ENCODE measurements at regions of chr19 and their contacts with region 1.

Region 1: DNA sequence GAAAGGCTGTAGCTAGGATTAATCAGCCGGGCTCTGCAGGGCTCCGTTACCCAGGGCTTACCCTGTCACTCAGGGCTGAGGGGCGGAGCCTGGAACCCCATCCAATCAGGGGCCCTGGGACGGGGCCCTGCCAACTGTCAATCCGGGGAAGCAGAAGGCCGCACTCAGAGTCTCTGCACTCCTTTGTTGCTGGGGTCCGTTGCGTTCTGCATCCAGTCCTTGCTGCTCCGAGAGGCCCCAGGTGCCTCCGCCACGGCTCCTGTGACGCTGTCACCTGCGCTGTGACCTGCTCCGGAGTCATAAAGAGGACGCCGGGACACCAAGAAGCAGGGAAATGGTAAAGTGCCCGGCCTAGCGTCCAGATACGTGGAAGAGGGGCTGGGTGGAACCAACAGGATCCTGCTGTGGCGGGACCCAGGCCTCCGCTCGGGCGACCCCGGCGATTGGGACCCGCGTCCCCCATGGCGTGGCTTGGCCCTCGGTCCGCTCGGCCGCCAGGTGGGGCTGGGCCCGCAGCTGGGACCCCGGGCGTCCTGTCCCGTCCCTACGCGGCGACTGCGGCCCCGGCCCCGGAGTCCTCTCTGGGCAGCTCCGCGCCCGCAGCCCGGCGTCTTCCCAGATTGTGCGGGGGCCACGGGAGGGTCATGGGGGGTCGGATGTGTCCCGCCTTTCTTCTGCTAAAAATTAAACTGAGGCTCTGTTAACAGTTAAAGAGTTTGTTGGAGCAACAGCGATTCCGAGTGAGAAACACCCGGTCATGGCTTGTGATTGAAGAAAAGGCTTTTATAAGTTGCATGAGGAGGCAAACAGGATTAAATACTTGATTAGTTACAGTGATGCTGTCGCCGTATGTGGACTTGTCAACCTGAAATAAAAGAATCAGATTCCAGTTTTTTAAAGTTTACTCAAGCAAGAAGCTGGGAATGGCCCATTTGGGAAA is at the start of gene ZNF491:
- DNase-seq: peak; percentile 77
- ATAC-seq: peak; percentile 99
- H3K4me3 Mint-ChIP-seq: peak within 1 kb of the TSS; percentile 91
- H3K27ac Mint-ChIP-seq: peak within 1 kb of the TSS; percentile 71
- H3K4me1 Mint-ChIP-seq: peaks cover 25% of the 10 kb centered on the region
- H3K27me3 Mint-ChIP-seq: no peaks in the 10 kb centered on the region
- CTCF ChIP-seq: no peak
- total RNA-seq, gene ZNF491: 1.4 and 1.7 TPM in 2 replicates

Region 2: DNA sequence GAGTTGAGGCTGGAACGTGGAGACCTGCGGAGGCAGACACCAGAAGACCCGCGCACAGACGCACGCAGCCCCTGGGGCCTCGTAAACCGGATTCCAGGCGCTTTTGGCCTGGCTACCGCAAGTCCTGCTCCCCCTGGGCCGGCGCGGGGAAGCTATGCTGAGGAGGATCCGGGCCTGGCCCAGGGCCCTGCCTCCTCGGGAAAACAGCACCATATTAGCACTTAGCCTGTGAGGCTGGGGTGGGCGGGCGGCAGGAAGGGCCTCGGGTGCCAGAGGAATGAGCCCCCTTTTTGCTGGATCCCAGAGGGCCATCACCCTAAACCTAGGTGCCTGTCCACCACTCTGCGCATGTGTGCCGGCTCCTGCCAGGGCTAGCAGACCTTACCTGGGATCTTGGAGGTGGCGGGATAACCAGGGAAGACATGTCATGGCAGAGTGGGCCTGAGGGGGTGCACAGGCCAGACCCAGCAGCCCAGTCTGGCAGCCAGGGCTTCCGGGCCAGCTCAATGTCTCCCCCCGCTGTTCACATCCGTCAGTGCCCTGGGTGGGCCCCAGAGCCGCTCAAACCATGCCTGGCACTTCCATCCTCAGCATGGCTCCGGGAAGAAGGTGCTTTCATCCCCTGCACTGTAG is 246.9 kb before region 1 on chr19:
- CTCF ChIA-PET with region 1: no interaction called
- POLR2A ChIA-PET with region 1: no interaction called
- intact Hi-C with region 1: no loop called
- DNase-seq: no peak
- ATAC-seq: no peak
- H3K4me3 Mint-ChIP-seq: no peak overlapping the region
- H3K27ac Mint-ChIP-seq: no peak overlapping the region
- H3K4me1 Mint-ChIP-seq: peaks cover 39% of the 10 kb centered on the region
- H3K27me3 Mint-ChIP-seq: no peaks in the 10 kb centered on the region
- CTCF ChIP-seq: no peak

Region 3: DNA sequence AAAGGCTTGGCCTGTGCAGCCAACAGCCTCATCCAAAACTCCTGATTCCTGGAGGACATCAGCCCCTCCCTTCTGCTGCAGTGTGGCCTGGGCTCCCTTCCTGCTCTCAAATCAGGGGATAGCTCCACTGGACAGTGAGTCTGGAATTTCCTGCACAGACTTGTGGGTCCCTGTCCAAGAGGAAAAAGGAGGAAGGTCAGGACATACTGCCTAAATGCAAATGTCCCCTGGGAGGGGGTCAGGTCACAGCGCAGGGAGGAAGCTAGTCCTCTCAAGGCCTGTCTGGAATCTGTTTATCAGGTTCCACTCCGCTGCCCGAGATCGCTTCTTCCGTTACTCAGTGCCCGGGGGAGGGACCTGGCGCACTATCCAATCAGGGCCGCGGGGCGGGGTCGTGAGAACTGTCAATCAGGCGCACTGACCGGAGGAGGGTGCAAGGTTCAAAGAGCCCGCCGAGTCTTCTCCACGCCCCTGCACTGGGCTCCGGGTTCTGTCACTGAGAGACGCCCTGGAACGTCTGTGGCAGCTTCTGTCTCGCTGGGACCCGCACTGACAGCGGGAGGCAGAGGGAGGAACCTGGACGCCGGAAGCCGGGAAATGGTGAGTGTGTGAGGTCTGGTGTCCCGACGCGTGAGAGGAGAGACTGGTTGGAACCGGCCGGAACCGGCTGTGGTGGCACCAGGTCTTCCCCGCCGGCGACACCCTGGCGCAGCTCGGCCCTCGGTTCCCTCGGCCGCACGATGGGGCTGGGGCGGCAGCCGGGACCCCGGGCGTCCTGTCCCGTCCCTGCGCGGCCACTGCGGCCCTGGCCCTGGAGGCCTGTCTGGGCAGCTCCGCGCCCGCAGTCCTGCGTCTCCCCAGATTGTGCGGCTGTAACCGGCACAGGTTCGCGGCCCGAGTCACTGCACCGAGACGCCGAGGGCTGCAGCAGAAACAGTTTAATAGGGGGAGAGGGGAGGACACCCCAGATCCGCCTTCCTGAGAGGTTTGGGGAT is 31.8 kb before region 1 on chr19 and contains the start of gene ZNF441:
- CTCF ChIA-PET with region 1: interaction called, 6 read pairs
- POLR2A ChIA-PET with region 1: interaction called, 9 read pairs
- intact Hi-C with region 1: loop called (anchors 1 kb)
- DNase-seq: peak; percentile 87
- ATAC-seq: peak; percentile 95
- H3K4me3 Mint-ChIP-seq: peak within 1 kb of the TSS; percentile 99
- H3K27ac Mint-ChIP-seq: peak within 1 kb of the TSS; percentile 96
- H3K4me1 Mint-ChIP-seq: peaks cover 25% of the 10 kb centered on the region
- H3K27me3 Mint-ChIP-seq: peaks cover 2% of the 10 kb centered on the region
- CTCF ChIP-seq: no peak
- total RNA-seq, gene ZNF441: 23.3 and 23.9 TPM in 2 replicates

Region 4: GRCh38 chr19:11814029-11814699 is 15.5 kb after region 1 on chr19 and contains the start of gene ZNF440:
- CTCF ChIA-PET with region 1: interaction called, 17 read pairs
- POLR2A ChIA-PET with region 1: interaction called, 4 read pairs
- intact Hi-C with region 1: loop called (anchors 1 kb)
- DNase-seq: peak; percentile 83
- ATAC-seq: peak; percentile 99
- H3K4me3 Mint-ChIP-seq: peak within 1 kb of the TSS; percentile 92
- H3K27ac Mint-ChIP-seq: peak within 1 kb of the TSS; percentile 84
- H3K4me1 Mint-ChIP-seq: peaks cover 28% of the 10 kb centered on the region
- H3K27me3 Mint-ChIP-seq: no peaks in the 10 kb centered on the region
- CTCF ChIP-seq: no peak
- total RNA-seq, gene ZNF440: 17.7 and 18.5 TPM in 2 replicates

Region 5: DNA sequence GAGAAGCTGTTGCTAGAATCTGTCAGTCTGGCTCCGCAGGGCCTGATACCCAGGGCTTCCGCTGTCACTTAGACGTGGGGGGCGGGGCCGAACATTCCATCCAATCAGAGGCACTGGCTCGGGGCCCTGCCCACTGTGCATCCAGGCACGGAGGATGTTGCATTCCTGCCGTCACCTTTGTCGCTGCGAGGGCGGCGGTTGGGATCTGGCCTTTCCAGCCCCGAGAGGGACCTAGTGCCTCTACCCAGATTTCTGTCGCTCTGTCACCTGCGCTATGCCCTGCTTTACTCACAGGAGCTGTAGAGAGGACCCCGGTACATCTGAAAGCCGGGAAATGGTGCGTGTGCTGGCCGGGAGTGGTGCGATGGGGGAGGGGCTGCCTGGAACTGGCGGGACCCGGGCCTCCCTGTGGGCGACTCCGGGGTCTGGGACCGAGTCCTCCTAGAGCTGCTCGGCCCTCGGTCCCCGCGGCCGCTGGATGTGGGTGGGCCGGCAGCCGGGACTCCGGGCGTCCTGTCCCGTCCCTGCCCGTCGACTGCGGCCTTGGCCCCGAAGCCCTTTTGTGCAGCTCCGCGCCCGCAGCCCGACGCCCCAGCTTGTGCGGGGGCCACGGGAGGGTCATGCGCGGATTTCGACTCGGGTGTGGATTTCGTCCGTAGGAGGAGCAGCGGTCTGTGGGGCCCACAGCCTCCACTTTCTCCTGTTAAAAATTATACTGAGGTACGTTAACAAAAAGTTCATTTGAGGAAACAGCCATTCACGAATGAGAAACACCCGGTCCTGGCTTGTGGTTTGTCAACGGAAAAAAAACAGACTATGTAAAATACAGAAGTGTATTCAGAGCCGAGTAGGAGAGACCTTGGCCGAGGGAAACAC is 50.2 kb after region 1 on chr19 and contains the start of gene ZNF439:
- CTCF ChIA-PET with region 1: interaction called, 5 read pairs
- POLR2A ChIA-PET with region 1: interaction called, 5 read pairs
- intact Hi-C with region 1: loop called (anchors 2 kb)
- DNase-seq: peak; percentile 87
- ATAC-seq: peak; percentile 99
- H3K4me3 Mint-ChIP-seq: peak within 1 kb of the TSS; percentile 94
- H3K27ac Mint-ChIP-seq: peak within 1 kb of the TSS; percentile 92
- H3K4me1 Mint-ChIP-seq: peaks cover 36% of the 10 kb centered on the region
- H3K27me3 Mint-ChIP-seq: no peaks in the 10 kb centered on the region
- CTCF ChIP-seq: no peak
- total RNA-seq, gene ZNF439: 19.9 and 22.8 TPM in 2 replicates

Region 6: GRCh38 chr19:11881151-11881800 is 82.6 kb after region 1 on chr19:
- CTCF ChIA-PET with region 1: interaction called, 6 read pairs
- POLR2A ChIA-PET with region 1: interaction called, 3 read pairs
- intact Hi-C with region 1: loop called (anchors 5 kb)
- DNase-seq: peak; percentile 27
- ATAC-seq: peak; percentile 82
- H3K4me3 Mint-ChIP-seq: no peak overlapping the region
- H3K27ac Mint-ChIP-seq: no peak overlapping the region
- H3K4me1 Mint-ChIP-seq: peaks cover 2% of the 10 kb centered on the region
- H3K27me3 Mint-ChIP-seq: no peaks in the 10 kb centered on the region
- CTCF ChIP-seq: no peak

Region 7: GRCh38 chr19:11964858-11965645 is 166.4 kb after region 1 on chr19 and contains the start of gene ZNF763:
- CTCF ChIA-PET with region 1: interaction called, 6 read pairs
- POLR2A ChIA-PET with region 1: no interaction called
- intact Hi-C with region 1: loop called (anchors 1 kb)
- DNase-seq: peak; percentile 79
- ATAC-seq: peak; percentile 92
- H3K4me3 Mint-ChIP-seq: peak within 1 kb of the TSS; percentile 93
- H3K27ac Mint-ChIP-seq: peak within 1 kb of the TSS; percentile 97
- H3K4me1 Mint-ChIP-seq: peaks cover 26% of the 10 kb centered on the region
- H3K27me3 Mint-ChIP-seq: no peaks in the 10 kb centered on the region
- CTCF ChIP-seq: no peak
- total RNA-seq, gene ZNF763: 9.8 and 10.0 TPM in 2 replicates

Region 8: DNA sequence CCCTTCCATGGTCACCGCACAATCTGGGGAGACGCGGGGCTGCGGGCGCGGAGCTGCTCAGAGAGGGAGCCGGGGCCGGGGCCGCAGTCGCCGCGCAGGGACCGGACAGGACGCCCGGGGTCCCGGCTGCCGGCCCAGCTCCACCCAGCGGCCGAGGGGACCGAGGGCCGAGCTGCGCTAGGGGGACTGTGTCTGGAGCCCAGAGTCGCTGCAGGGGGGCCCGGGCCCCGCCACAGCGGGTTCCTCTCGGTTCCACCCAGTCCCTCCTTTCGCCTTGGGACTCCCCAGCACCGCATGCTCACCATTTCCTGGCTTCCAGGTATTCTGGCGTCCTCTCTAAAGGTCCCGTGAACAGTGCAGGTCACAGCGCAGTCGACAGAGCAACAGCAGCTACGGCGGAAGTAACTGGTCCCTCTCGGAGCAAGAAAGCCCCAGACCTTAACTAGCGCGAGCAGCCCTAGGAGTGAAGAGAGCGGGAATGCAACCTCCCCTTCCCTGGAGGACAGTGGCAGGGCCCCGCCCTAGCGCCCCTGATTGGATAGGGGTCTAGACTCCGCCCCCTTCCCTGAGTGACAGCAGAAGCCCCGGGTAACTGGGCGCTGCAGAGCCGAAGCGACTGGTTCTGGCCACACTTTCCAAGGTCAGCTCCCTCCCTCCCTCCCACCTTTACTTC is 254.0 kb after region 1 on chr19 and contains the start of gene ZNF878:
- CTCF ChIA-PET with region 1: interaction called, 5 read pairs
- POLR2A ChIA-PET with region 1: no interaction called
- intact Hi-C with region 1: loop called (anchors 5 kb)
- DNase-seq: peak; percentile 48
- ATAC-seq: peak; percentile 90
- H3K4me3 Mint-ChIP-seq: peak within 1 kb of the TSS; percentile 87
- H3K27ac Mint-ChIP-seq: peak within 1 kb of the TSS; percentile 27
- H3K4me1 Mint-ChIP-seq: peaks cover 12% of the 10 kb centered on the region
- H3K27me3 Mint-ChIP-seq: peaks cover 4% of the 10 kb centered on the region
- CTCF ChIP-seq: no peak
- total RNA-seq, gene ZNF878: 1.2 and 1.6 TPM in 2 replicates

Measured in activated B cell treated with CpG ODN at 0.5 μM for 24 hours (primary cell).